Endothelial cell of umbilical vein (primary cell): ENCODE measurements at regions of chr4 and their contacts with region 1.

Region 1: GRCh38 chr4:154877110-154877760 is 96.2 kb downstream of the RBM46 start:
- DNase-seq: peak; percentile 6
- H3K4me3 ChIP-seq: no peak overlapping the region
- H3K27ac ChIP-seq: no peak overlapping the region
- H3K4me1 ChIP-seq: no peaks in the 10 kb centered on the region
- H3K27me3 ChIP-seq: no peaks in the 10 kb centered on the region
- CTCF ChIP-seq: no peak
- POLR2A ChIP-seq: no peak

Region 2: DNA sequence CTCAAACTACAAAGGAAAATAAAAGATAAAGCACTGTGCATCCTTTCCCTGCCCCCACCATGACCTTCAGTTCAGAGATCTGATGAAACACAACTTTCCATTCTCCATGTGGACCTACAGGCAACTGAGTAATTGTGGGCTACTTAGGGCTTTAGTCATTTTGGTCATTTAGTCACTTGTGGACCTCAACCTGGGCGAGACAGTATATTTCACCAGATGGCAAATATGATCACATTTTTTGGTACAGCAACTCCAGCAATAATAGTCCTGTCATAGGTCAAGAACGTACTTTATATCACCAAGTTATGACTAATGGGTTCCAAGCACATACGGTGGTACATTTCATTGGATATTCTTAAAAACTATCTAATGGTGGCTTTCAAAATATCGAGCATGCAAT is 1953.1 kb after region 1 on chr4:
- CTCF ChIA-PET with region 1: no interaction called
- POLR2A ChIA-PET with region 1: no interaction called
- dilution Hi-C with region 1: no loop called
- intact Hi-C with region 1: loop called (anchors 10 kb)
- DNase-seq: no peak
- H3K4me3 ChIP-seq: no peak overlapping the region
- H3K27ac ChIP-seq: no peak overlapping the region
- H3K4me1 ChIP-seq: no peaks in the 10 kb centered on the region
- H3K27me3 ChIP-seq: no peaks in the 10 kb centered on the region
- CTCF ChIP-seq: no peak
- POLR2A ChIP-seq: no peak